ENCODE measurements at regions of chr17 and their contacts with region 1.

Region 1: DNA sequence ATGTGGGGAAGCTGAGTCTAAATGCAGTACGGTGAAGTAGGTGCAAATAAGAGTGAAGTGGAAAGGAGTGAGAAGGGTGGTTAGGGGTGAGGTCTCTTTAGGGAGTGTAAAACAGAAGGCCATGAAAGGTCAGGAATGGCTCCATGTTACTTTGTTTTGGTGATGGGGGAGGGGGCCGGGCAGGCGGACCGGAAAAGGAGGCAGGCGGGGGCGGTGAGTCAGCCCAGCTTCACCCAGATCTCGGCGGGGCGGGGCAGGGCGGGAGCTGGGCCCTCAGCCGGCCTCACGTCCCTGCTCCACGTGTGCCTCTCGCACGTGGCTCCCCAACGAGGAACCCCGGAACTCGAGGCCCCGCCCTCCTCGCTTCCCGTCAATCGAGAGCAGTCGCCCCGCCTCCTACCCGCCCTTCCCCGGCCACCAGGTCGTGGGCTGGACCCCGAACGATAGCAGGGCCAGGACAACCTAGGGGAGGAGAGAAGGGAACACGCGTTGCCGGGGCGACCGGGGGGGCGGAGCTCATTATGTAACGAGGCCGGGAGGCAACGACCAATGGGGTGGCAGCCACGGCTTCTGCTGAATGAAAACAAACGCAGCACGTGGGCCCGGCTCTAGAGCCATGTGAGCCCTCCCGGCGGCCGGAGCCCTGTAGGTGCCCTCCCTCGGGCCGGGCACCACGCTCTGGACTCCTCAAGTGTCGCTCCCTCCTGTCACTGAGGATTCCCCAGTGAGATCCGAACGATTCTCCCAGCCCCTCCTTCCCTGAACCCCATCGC is 1.4 kb downstream of the NR1D1 start:
- DNase-seq: peak; percentile 100
- H3K4me3 Mint-ChIP-seq: peak overlapping the region; percentile 95
- H3K27ac Mint-ChIP-seq: peak overlapping the region; percentile 94
- H3K4me1 Mint-ChIP-seq: peaks cover 31% of the 10 kb centered on the region
- H3K27me3 Mint-ChIP-seq: no peaks in the 10 kb centered on the region
- CTCF ChIP-seq: no peak

Region 2: DNA sequence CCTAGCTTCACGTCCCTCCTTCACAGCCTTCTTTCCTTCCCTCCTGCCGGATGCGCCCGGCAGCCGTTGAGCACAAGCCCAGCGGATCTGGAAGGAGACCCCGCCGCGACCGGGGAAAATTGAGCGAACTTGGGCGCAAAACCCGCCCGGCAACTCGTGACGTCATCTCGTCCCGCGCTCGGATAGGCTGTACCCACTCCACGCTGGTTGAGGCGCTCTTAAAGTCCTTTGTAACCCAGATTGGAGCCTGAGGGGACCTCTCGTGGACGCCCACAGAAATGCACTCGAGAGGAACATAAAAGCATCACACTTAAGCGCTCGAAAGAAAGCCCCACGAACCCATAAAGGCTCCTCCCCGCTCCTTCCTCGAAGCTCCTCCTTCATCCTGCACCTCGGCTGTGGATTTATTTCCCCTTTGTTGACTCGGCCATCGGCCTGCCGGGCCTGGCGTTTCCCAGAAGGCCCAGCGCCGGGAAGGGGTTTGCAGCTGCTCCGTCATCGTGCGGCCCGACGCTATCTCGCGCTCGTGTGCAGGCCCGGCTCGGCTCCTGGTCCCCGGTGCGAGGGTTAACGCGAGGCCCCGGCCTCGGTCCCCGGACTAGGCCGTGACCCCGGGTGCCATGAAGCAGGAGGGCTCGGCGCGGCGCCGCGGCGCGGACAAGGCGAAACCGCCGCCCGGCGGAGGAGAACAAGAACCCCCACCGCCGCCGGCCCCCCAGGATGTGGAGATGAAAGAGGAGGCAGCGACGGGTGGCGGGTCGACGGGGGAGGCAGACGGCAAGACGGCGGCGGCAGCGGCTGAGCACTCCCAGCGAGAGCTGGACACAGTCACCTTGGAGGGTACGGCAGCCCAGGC is 118.5 kb before region 1 on chr17 and contains the start of gene PSMD3:
- CTCF ChIA-PET with region 1: interaction called, 3 read pairs
- POLR2A ChIA-PET with region 1: interaction called, 48 read pairs
- intact Hi-C with region 1: no loop called
- DNase-seq: peak; percentile 99
- H3K4me3 Mint-ChIP-seq: peak within 1 kb of the TSS; percentile 96
- H3K27ac Mint-ChIP-seq: peak within 1 kb of the TSS; percentile 98
- H3K4me1 Mint-ChIP-seq: peaks cover 26% of the 10 kb centered on the region
- H3K27me3 Mint-ChIP-seq: no peaks in the 10 kb centered on the region
- CTCF ChIP-seq: peak; percentile 50
- total RNA-seq, gene PSMD3: 74.2 and 95.3 TPM in 2 replicates

Region 3: GRCh38 chr17:40026816-40027613 is 72.0 kb before region 1 on chr17:
- CTCF ChIA-PET with region 1: interaction called, 4 read pairs
- POLR2A ChIA-PET with region 1: interaction called, 79 read pairs
- intact Hi-C with region 1: no loop called
- DNase-seq: peak; percentile 95
- H3K4me3 Mint-ChIP-seq: peak overlapping the region; percentile 52
- H3K27ac Mint-ChIP-seq: peak overlapping the region; percentile 87
- H3K4me1 Mint-ChIP-seq: peaks cover 47% of the 10 kb centered on the region
- H3K27me3 Mint-ChIP-seq: no peaks in the 10 kb centered on the region
- CTCF ChIP-seq: peak; percentile 91

Region 4: GRCh38 chr17:40075201-40075941 is 23.7 kb before region 1 on chr17:
- CTCF ChIA-PET with region 1: interaction called, 22 read pairs
- POLR2A ChIA-PET with region 1: interaction called, 99 read pairs
- intact Hi-C with region 1: no loop called
- DNase-seq: peak; percentile 78
- H3K4me3 Mint-ChIP-seq: peak overlapping the region; percentile 65
- H3K27ac Mint-ChIP-seq: peak overlapping the region; percentile 36
- H3K4me1 Mint-ChIP-seq: peaks cover 62% of the 10 kb centered on the region
- H3K27me3 Mint-ChIP-seq: no peaks in the 10 kb centered on the region
- CTCF ChIP-seq: peak; percentile 89

Region 5: GRCh38 chr17:40139566-40140058 is 40.6 kb after region 1 on chr17:
- CTCF ChIA-PET with region 1: interaction called, 4 read pairs
- POLR2A ChIA-PET with region 1: interaction called, 93 read pairs
- intact Hi-C with region 1: no loop called
- DNase-seq: no peak
- H3K4me3 Mint-ChIP-seq: peak overlapping the region; percentile 90
- H3K27ac Mint-ChIP-seq: peak overlapping the region; percentile 81
- H3K4me1 Mint-ChIP-seq: peaks cover 8% of the 10 kb centered on the region
- H3K27me3 Mint-ChIP-seq: no peaks in the 10 kb centered on the region
- CTCF ChIP-seq: no peak

Region 6: DNA sequence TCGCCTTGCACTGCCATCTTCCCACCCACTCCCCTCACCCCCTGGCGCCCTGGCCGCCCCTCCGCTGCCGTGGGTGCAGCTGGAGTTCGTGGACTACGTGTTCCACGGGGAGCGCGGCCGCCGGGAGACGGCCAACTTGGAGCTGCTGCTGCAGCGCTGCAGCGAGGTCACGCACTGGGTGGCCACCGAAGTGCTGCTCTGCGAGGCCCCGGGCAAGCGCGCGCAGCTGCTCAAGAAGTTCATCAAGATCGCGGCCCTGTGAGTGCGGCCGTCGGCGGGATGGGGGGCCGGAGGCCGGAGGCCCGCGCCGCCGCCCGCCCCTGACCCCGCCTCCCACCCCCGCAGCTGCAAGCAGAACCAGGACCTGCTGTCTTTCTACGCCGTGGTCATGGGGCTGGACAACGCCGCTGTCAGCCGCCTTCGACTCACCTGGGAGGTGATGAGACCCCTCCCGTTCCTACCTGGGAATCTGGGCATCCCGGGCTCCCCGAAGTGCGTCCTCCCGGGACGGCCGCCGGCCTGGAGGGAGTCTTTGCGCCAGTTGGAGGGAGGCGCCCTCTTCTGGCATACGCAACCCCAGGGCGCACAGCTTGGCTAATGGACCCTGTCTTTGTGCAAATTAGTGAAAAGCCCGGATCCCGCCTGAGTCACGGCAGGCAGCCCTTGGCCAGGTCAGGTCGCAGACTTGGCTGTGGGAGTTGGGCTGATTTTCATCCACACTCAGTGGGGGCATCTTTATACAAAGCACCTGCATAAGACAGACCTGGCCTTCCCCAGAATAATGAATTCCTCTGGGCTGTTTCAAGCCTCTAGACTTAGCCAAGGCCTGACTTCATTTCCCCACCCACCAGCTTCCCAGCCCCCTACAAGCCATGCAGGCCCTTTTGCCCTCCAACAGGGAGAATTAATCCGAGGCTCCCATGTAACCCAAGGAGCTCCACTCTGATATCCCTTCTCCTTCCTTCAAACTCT is 92.5 kb after region 1 on chr17:
- CTCF ChIA-PET with region 1: no interaction called
- POLR2A ChIA-PET with region 1: interaction called, 21 read pairs
- intact Hi-C with region 1: no loop called
- DNase-seq: peak; percentile 66
- H3K4me3 Mint-ChIP-seq: peak overlapping the region; percentile 72
- H3K27ac Mint-ChIP-seq: no peak overlapping the region
- H3K4me1 Mint-ChIP-seq: peaks cover 18% of the 10 kb centered on the region
- H3K27me3 Mint-ChIP-seq: no peaks in the 10 kb centered on the region
- CTCF ChIP-seq: no peak

Region 7: DNA sequence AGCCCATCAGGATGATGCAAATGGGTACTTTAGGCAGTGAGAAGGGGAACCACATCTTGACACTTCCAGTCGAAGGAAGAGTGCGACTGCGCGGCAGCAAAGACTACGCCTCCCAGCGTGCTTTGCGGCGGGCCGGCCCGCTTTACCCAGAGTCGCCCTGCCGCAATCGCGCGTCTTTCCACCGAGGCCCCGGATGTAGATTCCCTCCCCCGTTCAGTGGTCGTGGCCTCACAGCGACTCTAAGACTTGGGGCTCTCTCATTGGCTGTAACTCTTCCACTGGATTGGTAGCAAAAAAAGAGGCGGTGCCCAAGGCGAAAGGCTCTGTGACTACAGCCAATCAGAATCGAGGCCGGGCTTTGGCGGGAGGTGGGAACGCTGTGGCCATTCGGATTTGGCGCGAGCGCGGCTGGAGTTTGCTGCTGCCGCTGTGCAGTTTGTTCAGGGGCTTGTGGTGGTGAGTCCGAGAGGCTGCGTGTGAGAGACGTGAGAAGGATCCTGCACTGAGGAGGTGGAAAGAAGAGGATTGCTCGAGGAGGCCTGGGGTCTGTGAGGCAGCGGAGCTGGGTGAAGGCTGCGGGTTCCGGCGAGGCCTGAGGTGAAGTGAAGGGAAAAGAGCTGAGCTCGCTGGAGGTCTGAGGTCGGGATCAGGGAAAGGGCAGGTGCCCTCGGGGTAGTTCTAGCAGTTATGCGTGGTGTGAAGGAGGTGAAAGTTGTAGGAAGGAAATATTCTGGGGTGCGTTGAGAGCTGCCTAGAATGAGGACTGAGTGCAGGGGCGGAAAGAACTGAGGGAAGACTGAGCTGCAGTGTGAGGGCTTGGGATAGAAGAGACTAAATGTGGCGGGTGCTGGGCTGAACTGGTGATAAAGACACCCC is 188.7 kb after region 1 on chr17 and contains the start of gene CDC6:
- CTCF ChIA-PET with region 1: interaction called, 3 read pairs
- POLR2A ChIA-PET with region 1: interaction called, 12 read pairs
- intact Hi-C with region 1: no loop called
- DNase-seq: peak; percentile 100
- H3K4me3 Mint-ChIP-seq: peak within 1 kb of the TSS; percentile 99
- H3K27ac Mint-ChIP-seq: peak within 1 kb of the TSS; percentile 69
- H3K4me1 Mint-ChIP-seq: peaks cover 24% of the 10 kb centered on the region
- H3K27me3 Mint-ChIP-seq: no peaks in the 10 kb centered on the region
- CTCF ChIP-seq: no peak
- total RNA-seq, gene CDC6: 70.0 and 96.8 TPM in 2 replicates

Measured in MCF 10A (cell line).